Activated CD4-positive, alpha-beta T cell treated with anti-CD3 and anti-CD28 coated beads for 36 hours (primary cell): ENCODE measurements at regions of chr11 and their contacts with region 1.

Region 1: DNA sequence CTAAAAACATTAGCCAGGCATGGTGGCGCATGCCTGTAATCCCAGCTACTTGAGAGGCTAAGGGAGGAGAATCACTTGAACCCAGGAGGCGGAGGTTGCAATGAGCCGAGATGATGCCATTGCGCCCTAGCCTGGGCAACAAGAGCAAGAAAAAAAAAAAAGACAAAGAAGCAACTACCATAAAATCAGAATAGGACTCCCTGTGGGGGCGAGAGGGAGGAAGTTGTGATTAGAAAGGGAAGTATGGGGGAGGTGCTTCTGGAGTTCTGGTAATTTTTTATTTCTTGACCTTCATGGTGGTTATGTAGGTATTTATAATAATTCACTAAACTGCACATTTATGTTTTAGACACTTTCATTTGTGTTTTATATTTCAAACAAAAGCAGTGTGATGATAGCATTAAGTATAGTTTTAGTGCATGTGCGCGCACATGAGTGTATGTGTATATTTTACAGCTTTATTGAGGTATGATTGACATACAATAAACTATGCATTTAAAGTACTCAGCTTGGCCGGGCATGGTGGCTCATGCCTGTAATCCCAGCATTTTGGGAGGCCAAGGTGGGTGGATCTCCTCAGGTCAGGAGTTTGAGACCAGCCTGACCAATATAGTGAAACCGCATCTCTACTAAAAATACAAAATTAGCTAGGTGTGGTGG is 43.5 kb downstream of the SIK2 start:
- DNase-seq: no peak
- ATAC-seq: no peak
- H3K4me3 Mint-ChIP-seq: no peak overlapping the region
- H3K27ac Mint-ChIP-seq: no peak overlapping the region
- H3K4me1 Mint-ChIP-seq: peaks cover 2% of the 10 kb centered on the region
- H3K27me3 Mint-ChIP-seq: no peaks in the 10 kb centered on the region

Region 2: GRCh38 chr11:111574373-111575225 is 71.2 kb before region 1 on chr11:
- CTCF ChIA-PET with region 1: no interaction called
- POLR2A ChIA-PET with region 1: no interaction called
- intact Hi-C with region 1: no loop called
- DNase-seq: peak; percentile 13
- ATAC-seq: peak; percentile 33
- H3K4me3 Mint-ChIP-seq: no peak overlapping the region
- H3K27ac Mint-ChIP-seq: no peak overlapping the region
- H3K4me1 Mint-ChIP-seq: no peaks in the 10 kb centered on the region
- H3K27me3 Mint-ChIP-seq: peaks cover 3% of the 10 kb centered on the region

Region 3: GRCh38 chr11:111659201-111660115 is 13.7 kb after region 1 on chr11:
- CTCF ChIA-PET with region 1: interaction called, 4 read pairs
- POLR2A ChIA-PET with region 1: no interaction called
- intact Hi-C with region 1: loop called in 1 of 2 experiments (anchors 2 kb)
- DNase-seq: no peak
- ATAC-seq: no peak
- H3K4me3 Mint-ChIP-seq: no peak overlapping the region
- H3K27ac Mint-ChIP-seq: no peak overlapping the region
- H3K4me1 Mint-ChIP-seq: peaks cover 3% of the 10 kb centered on the region
- H3K27me3 Mint-ChIP-seq: no peaks in the 10 kb centered on the region

Region 4: GRCh38 chr11:111672949-111673348 is 27.2 kb after region 1 on chr11:
- CTCF ChIA-PET with region 1: no interaction called
- POLR2A ChIA-PET with region 1: no interaction called
- intact Hi-C with region 1: no loop called
- DNase-seq: no peak
- ATAC-seq: peak; percentile 51
- H3K4me3 Mint-ChIP-seq: no peak overlapping the region
- H3K27ac Mint-ChIP-seq: no peak overlapping the region
- H3K4me1 Mint-ChIP-seq: peaks cover 12% of the 10 kb centered on the region
- H3K27me3 Mint-ChIP-seq: no peaks in the 10 kb centered on the region